ENCODE measurements at regions of chr17 and their contacts with region 1.

Region 1: GRCh38 chr17:34378664-34379101 is 15.7 kb upstream of the CCL1 start:
- DNase-seq: peak; percentile 32
- H3K4me3 Mint-ChIP-seq: peak overlapping the region; percentile 62
- H3K27ac Mint-ChIP-seq: peak overlapping the region; percentile 77
- H3K4me1 Mint-ChIP-seq: peaks cover 75% of the 10 kb centered on the region
- H3K27me3 Mint-ChIP-seq: peaks cover 12% of the 10 kb centered on the region

Region 2: GRCh38 chr17:34300652-34301370 is 77.9 kb before region 1 on chr17:
- intact Hi-C with region 1: loop called (anchors 1 kb)
- DNase-seq: no peak
- H3K4me3 Mint-ChIP-seq: no peak overlapping the region
- H3K27ac Mint-ChIP-seq: no peak overlapping the region
- H3K4me1 Mint-ChIP-seq: peaks cover 42% of the 10 kb centered on the region
- H3K27me3 Mint-ChIP-seq: peaks cover 2% of the 10 kb centered on the region

Region 3: DNA sequence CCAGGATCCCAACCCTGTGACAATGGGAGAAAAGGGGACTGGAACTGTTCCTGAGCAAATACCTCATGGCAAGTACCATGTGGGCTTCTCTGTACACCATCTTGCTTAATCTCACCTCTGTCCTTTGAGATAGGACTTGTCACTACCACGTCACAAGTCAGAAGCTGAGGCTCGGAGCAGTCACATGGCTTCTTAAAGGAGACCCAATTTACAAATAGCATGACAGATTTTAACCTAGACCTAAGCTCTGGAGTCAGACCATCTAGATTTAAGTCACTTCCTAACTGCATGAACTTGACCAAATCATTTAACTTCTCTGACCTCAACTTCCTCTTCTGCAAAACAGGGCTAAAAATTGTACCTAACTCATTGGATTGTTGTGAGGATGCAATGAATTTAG is 20.3 kb after region 1 on chr17:
- intact Hi-C with region 1: loop called (anchors 2 kb)
- DNase-seq: no peak
- H3K4me3 Mint-ChIP-seq: no peak overlapping the region
- H3K27ac Mint-ChIP-seq: peak overlapping the region; percentile 27
- H3K4me1 Mint-ChIP-seq: peaks cover 32% of the 10 kb centered on the region
- H3K27me3 Mint-ChIP-seq: peaks cover 29% of the 10 kb centered on the region

Measured in activated T-helper 1 cell treated with anti-CD3 and anti-CD28 coated beads, Interleukin-12 subunit alpha, Interleukin-12 subunit beta, Interleukin-2, Interleukin-4 antibody, amounts not matched to agents 30 ng/mL and 10 ng/mL and 1 ng/mL, durations not matched to agents 14 hours and 24 hours and 36 hours (primary cell).